Activated CD4-positive, alpha-beta T cell treated with anti-CD3 and anti-CD28 coated beads, Interleukin-2, amount 10 ng/mL, durations not matched to agents 24 days and 14 days (primary cell): ENCODE measurements at regions of chr6 and their contacts with region 1.

Region 1: DNA sequence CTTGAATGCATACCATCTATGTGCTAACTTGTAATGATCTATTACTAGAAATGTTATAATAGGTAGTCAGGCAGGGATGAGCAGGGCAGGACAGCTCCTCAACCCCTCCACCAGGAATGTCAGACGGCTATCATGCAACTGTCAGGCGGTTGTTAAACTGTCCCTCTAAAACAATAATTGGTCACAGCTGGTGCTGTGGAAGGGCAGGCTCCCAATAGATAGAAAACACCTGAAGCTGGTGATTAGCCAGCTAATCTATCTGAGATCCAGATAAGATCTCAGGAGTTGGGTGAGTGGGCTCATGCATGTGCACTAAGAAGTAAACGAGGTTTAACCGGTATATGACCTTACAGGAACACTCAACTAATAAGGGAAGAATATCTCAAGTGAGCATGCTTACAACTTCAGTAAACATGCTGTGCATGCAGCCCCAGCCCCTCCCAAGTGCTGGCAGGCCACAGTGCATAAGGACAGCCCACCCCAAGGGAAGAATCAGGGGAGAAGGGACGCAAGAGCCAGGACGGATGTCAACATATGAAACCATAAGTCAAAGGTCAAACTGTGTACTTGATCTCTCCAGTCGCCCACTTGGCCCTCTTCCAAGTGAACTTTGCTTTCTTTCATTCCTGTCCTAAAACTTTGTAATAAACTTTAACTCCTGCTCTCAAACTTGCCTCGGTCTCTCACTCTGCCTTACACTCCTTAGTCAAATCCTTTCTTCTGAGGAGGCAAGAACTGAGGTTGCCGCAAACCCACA is 566.2 kb upstream of the NRSN1 start:
- DNase-seq: no peak
- H3K4me3 Mint-ChIP-seq: no peak overlapping the region
- H3K27ac Mint-ChIP-seq: no peak overlapping the region
- H3K4me1 Mint-ChIP-seq: no peaks in the 10 kb centered on the region
- H3K27me3 Mint-ChIP-seq: no peaks in the 10 kb centered on the region

Region 2: GRCh38 chr6:21846541-21847451 is 1713.0 kb before region 1 on chr6:
- intact Hi-C with region 1: loop called (anchors 10 kb)
- DNase-seq: peak; percentile 57
- H3K4me3 Mint-ChIP-seq: no peak overlapping the region
- H3K27ac Mint-ChIP-seq: peak overlapping the region; percentile 65
- H3K4me1 Mint-ChIP-seq: peaks cover 15% of the 10 kb centered on the region
- H3K27me3 Mint-ChIP-seq: no peaks in the 10 kb centered on the region